ENCODE measurements at regions of chr1 and their contacts with region 1.

Region 1: GRCh38 chr1:224377676-224378006 is 21.0 kb downstream of the CNIH4 start:
- DNase-seq: peak in 1 of 7 donors; percentile 16
- H3K4me3 ChIP-seq: no peak overlapping the region
- H3K27ac ChIP-seq: peak overlapping the region in 1 of 5 donors; percentile 52
- H3K4me1 ChIP-seq: peaks cover 7 to 35% of the 10 kb centered on the region in 2 donors
- H3K27me3 ChIP-seq: no peaks in the 10 kb centered on the region
- CTCF ChIP-seq: no peak
- POLR2A ChIP-seq: no peak

Region 2: GRCh38 chr1:223802602-223803001 is 575.0 kb before region 1 on chr1:
- intact Hi-C with region 1: no loop called
- DNase-seq: no peak
- H3K4me3 ChIP-seq: no peak overlapping the region
- H3K27ac ChIP-seq: no peak overlapping the region
- H3K4me1 ChIP-seq: no peaks in the 10 kb centered on the region
- H3K27me3 ChIP-seq: no peaks in the 10 kb centered on the region
- CTCF ChIP-seq: no peak
- POLR2A ChIP-seq: no peak

Region 3: DNA sequence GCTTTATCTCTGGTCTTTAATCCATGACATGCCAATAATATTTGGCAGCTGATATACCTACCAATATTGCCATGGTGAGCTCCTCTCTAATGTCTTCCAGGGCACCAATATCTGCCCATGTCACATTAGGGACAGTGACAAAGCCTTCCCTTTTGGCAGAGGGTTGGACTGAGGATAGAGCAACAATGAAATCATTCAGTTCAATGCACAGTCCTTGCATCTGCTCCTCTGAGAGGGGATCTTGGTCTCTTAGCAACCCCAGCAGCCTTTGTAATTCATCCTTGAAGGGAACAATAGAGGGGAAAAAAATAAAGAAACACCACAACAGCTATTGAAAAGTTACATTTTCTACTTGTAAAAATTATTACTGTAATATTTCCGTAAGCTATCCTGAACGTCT is 89.9 kb before region 1 on chr1:
- intact Hi-C with region 1: no loop called
- DNase-seq: no peak
- H3K4me3 ChIP-seq: no peak overlapping the region
- H3K27ac ChIP-seq: no peak overlapping the region
- H3K4me1 ChIP-seq: no peaks in the 10 kb centered on the region
- H3K27me3 ChIP-seq: no peaks in the 10 kb centered on the region
- CTCF ChIP-seq: no peak
- POLR2A ChIP-seq: no peak

Region 4: DNA sequence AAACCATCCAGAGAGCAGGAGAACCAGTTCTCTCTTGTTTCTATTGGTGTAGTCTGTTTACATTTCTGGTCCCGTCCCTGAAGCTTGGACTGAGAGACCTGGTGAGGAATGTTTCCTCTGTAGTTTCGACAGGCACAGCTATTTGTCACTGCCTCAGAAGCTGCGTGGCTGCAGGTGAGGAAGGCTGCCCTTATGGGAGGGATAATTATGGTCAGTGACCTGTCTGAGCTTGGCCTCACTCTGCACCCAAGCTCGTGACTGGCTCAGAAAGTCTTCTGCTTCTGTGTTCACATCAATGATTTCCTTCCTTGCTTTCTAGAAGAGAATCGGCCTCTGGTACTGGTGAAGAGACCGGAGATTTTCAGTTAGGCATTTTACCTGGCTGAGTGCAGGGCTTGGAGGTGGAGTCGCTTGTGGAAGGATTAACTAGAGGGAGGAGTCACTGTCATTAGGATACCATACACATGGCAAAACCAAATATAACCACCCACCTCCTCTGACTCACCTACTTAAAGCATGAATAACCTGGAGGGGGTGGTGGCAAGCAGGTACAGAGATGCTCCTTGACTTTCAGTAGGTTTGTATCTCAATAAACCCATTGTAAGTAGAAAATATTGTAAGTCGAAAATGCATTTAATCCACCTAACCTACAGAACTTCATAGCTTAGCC is 76.9 kb after region 1 on chr1:
- intact Hi-C with region 1: loop called in 1 of 2 experiments (anchors 10 kb)
- DNase-seq: no peak
- H3K4me3 ChIP-seq: no peak overlapping the region
- H3K27ac ChIP-seq: no peak overlapping the region
- H3K4me1 ChIP-seq: peaks cover 7 to 15% of the 10 kb centered on the region in 2 donors
- H3K27me3 ChIP-seq: no peaks in the 10 kb centered on the region
- CTCF ChIP-seq: no peak
- POLR2A ChIP-seq: no peak

Region 5: DNA sequence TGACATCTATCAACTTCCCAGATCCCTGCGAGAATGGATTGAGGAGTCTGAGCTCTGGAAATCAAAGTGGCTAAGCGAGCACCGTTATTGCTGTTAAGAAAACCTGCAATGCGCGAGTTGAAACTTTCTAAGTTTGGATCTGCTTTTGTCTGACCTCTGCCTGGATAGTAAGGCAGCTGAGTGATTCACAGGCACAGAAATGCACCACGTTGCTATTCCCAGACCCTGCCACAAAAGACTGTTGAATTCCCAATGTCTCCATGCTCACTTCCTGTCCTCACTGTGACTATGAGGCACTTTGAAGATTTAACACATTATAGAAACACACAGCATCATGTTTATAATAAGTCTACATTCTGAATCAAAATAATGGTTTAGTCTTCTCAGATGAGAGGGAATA is 211.4 kb after region 1 on chr1:
- intact Hi-C with region 1: no loop called
- DNase-seq: no peak
- H3K4me3 ChIP-seq: no peak overlapping the region
- H3K27ac ChIP-seq: no peak overlapping the region
- H3K4me1 ChIP-seq: no peaks in the 10 kb centered on the region
- H3K27me3 ChIP-seq: no peaks in the 10 kb centered on the region
- CTCF ChIP-seq: no peak
- POLR2A ChIP-seq: no peak

Region 6: GRCh38 chr1:224623743-224624333 is 246.2 kb after region 1 on chr1:
- intact Hi-C with region 1: no loop called
- DNase-seq: no peak
- H3K4me3 ChIP-seq: no peak overlapping the region
- H3K27ac ChIP-seq: no peak overlapping the region
- H3K4me1 ChIP-seq: no peaks in the 10 kb centered on the region
- H3K27me3 ChIP-seq: no peaks in the 10 kb centered on the region
- CTCF ChIP-seq: no peak
- POLR2A ChIP-seq: no peak